Gastrocnemius medialis (tissue), 4 donors: ENCODE measurements at regions of chr5 and their contacts with region 1.

Region 1: DNA sequence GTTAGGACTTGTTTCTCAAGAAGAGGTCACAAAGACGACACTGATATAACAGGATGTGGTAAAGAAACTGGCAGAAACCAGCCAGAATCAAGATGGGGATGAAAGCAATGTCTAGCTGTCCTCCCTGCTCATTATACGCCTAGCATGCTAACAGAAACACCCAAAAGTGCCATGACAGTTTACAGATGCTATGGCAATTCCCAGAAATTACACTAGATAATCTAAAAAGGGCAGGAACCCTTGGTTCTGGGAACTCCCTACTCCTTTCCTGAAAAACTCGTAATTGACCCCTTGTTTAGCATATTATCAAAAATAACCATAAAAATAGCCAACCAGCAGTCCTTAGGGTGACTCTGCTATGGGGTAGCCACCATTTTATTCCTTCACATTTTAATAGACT is 10.9 kb upstream of the MRPS30 start:
- DNase-seq: no peak
- ATAC-seq: no peak
- H3K4me3 ChIP-seq: no peak overlapping the region
- H3K27ac ChIP-seq: no peak overlapping the region
- H3K4me1 ChIP-seq: no peaks in the 10 kb centered on the region
- H3K27me3 ChIP-seq: no peaks in the 10 kb centered on the region
- CTCF ChIP-seq: no peak
- POLR2A ChIP-seq: no peak

Region 2: DNA sequence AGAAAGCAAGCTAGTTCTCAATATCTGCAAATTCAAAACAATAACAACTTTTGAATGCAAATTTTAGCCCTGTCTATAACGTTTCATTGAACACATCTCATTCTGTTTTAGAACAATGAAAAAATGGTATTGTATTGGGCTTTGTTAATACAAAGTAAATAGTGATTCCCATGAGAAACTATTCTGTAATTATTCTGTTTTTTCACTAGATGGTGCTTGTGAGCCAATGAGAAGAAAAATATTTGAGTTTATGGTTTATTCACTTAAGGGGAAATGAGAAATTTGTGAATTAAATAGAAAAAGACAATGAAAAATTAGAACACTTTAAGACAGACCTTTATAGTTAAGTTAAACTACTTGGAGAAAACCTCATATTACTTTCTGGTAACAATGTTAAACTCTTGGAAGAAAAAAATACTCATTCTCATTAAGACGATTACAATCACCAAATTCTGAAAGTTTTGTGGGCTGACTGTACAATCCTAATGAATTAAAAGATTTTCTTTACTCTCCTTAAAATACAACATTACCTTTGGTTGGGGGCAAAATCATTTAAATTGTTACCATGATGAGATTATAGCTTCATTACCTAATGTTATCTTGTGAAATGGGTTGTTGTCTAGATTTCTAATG is 1067.9 kb before region 1 on chr5:
- in situ Hi-C with region 1: loop called in 1 of 4 experiments (anchors 25 kb)
- intact Hi-C with region 1: no loop called
- DNase-seq: no peak
- ATAC-seq: no peak
- H3K4me3 ChIP-seq: no peak overlapping the region
- H3K27ac ChIP-seq: no peak overlapping the region
- H3K4me1 ChIP-seq: no peaks in the 10 kb centered on the region
- H3K27me3 ChIP-seq: no peaks in the 10 kb centered on the region
- CTCF ChIP-seq: peak in 3 of 5 experiments; percentile 26 to 49 (median 43)
- POLR2A ChIP-seq: no peak

Region 3: GRCh38 chr5:44885903-44886302 is 88.1 kb after region 1 on chr5:
- in situ Hi-C with region 1: no loop called
- intact Hi-C with region 1: no loop called
- DNase-seq: no peak
- ATAC-seq: no peak
- H3K4me3 ChIP-seq: no peak overlapping the region
- H3K27ac ChIP-seq: no peak overlapping the region
- H3K4me1 ChIP-seq: no peaks in the 10 kb centered on the region
- H3K27me3 ChIP-seq: no peaks in the 10 kb centered on the region
- CTCF ChIP-seq: no peak
- POLR2A ChIP-seq: no peak

Region 4: GRCh38 chr5:44952376-44952775 is 154.5 kb after region 1 on chr5:
- in situ Hi-C with region 1: no loop called
- intact Hi-C with region 1: no loop called
- DNase-seq: no peak
- ATAC-seq: no peak
- H3K4me3 ChIP-seq: no peak overlapping the region
- H3K27ac ChIP-seq: no peak overlapping the region
- H3K4me1 ChIP-seq: no peaks in the 10 kb centered on the region
- H3K27me3 ChIP-seq: no peaks in the 10 kb centered on the region
- CTCF ChIP-seq: peak in 3 of 5 experiments; percentile 14 to 44 (median 28)
- POLR2A ChIP-seq: no peak